ENCODE measurements at regions of chr7 and their contacts with region 1.

Region 1: GRCh38 chr7:31443457-31443856 is 70.4 kb upstream of the ITPRID1 start:
- DNase-seq: peak; percentile 48
- H3K4me3 ChIP-seq: no peak overlapping the region
- H3K27ac ChIP-seq: no peak overlapping the region
- H3K4me1 ChIP-seq: no peaks in the 10 kb centered on the region
- H3K27me3 ChIP-seq: peaks cover 0 to 4% of the 10 kb centered on the region in 2 experiments
- CTCF ChIP-seq: peak; percentile 63 to 67
- POLR2A ChIP-seq: no peak

Region 2: DNA sequence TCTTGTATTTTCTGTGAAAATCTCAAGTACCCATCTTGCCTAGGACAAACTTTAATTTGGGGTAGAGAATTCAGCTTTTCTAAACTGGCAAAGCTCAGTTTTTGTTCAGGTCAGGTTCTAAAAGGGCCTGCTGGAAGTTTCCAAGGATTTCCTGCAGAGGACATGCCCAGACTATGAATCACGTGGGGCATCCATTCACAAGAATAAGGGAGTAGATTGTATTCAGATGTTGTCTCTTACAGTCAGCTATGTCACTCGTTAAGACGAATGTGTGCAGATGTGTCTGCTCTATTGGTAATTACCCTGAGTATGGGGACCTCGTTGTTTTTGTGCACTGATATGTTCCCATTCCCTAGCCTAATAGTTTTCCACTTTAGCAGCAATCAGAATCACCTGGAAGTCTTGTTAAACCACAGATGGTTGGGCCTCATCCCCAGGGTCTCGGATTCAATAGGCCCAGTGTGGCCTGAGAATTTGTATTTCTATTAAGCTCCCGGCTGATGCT is 10.6 kb before region 1 on chr7:
- CTCF ChIA-PET with region 1: interaction called, 25 read pairs
- POLR2A ChIA-PET with region 1: no interaction called
- dilution Hi-C with region 1: no loop called
- intact Hi-C with region 1: no loop called
- DNase-seq: peak; percentile 2
- H3K4me3 ChIP-seq: no peak overlapping the region
- H3K27ac ChIP-seq: no peak overlapping the region
- H3K4me1 ChIP-seq: no peaks in the 10 kb centered on the region
- H3K27me3 ChIP-seq: no peaks in the 10 kb centered on the region
- CTCF ChIP-seq: no peak
- POLR2A ChIP-seq: no peak

Region 3: DNA sequence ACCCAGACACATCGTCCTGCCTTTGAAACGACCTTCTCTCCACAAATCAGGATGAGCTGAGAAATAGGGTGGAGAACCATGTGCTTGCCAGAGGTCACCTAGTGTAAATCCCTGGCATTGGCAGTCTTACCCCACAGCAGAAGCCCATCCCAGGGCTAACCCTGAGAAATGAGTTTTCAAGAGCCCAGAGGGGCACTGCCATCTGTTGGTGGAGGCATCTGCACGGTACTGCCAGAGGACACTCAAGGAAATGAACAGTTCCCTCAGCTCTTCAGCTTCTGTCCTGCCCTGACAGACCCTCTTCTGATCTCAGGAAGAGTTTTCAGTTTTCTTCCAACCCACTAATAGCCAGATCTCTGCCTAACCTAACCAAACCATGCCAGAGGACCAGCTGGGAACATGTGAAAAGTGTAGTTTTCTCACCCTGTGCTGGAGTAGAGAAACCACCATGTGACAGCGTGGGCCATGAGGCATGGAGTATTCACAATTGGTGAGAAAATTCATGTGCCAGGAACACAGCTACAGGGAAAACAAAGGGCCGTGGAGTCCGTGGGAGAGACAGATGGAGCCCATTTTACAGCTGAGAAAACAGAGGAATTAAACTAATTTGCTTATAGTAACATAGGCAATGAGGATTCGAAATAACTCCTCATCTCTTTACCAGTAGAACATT is 32.8 kb after region 1 on chr7:
- CTCF ChIA-PET with region 1: interaction called, 10 read pairs
- POLR2A ChIA-PET with region 1: no interaction called
- dilution Hi-C with region 1: no loop called
- intact Hi-C with region 1: no loop called
- DNase-seq: no peak
- H3K4me3 ChIP-seq: no peak overlapping the region
- H3K27ac ChIP-seq: no peak overlapping the region
- H3K4me1 ChIP-seq: no peaks in the 10 kb centered on the region
- H3K27me3 ChIP-seq: no peaks in the 10 kb centered on the region
- CTCF ChIP-seq: no peak
- POLR2A ChIP-seq: no peak

Region 4: GRCh38 chr7:31633894-31634494 is 190.5 kb after region 1 on chr7:
- CTCF ChIA-PET with region 1: interaction called, 24 read pairs
- POLR2A ChIA-PET with region 1: no interaction called
- dilution Hi-C with region 1: no loop called
- intact Hi-C with region 1: loop called (anchors 1 kb)
- DNase-seq: peak; percentile 44
- H3K4me3 ChIP-seq: no peak overlapping the region
- H3K27ac ChIP-seq: no peak overlapping the region
- H3K4me1 ChIP-seq: no peaks in the 10 kb centered on the region
- H3K27me3 ChIP-seq: no peaks in the 10 kb centered on the region
- CTCF ChIP-seq: peak; percentile 26 to 43
- POLR2A ChIP-seq: no peak